Activated CD8-positive, alpha-beta T cell treated with anti-CD3 and anti-CD28 coated beads, Interleukin-2, amount 10 ng/mL, durations not matched to agents 7 days and 5 days (primary cell): ENCODE measurements at regions of chr3 and their contacts with region 1.

Region 1: DNA sequence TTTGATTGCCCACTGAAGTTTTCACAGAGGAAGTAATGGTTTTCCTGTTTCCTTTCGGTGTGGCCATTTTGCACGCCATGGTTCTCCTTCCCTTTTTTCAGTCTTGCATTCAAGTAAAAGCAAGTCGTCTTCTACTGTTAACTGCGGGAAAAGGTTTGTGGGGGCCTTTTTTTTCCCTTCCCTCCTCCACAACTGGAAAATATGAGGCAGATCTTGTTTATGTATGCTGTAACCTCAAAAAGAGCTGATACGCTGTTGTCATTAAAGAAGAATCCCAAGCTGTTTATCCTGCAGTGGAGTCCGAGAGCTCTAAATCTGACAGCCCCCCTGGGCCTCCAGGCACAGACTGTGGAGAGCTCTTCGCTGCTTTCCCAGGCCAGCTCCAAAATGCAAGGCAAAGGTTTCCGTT is 40.4 kb downstream of the FILIP1L start:
- DNase-seq: peak; percentile 53
- ATAC-seq: peak; percentile 48
- H3K4me3 Mint-ChIP-seq: peak overlapping the region; percentile 60
- H3K27ac Mint-ChIP-seq: peak overlapping the region; percentile 91
- H3K4me1 Mint-ChIP-seq: peaks cover 78% of the 10 kb centered on the region
- H3K27me3 Mint-ChIP-seq: no peaks in the 10 kb centered on the region

Region 2: DNA sequence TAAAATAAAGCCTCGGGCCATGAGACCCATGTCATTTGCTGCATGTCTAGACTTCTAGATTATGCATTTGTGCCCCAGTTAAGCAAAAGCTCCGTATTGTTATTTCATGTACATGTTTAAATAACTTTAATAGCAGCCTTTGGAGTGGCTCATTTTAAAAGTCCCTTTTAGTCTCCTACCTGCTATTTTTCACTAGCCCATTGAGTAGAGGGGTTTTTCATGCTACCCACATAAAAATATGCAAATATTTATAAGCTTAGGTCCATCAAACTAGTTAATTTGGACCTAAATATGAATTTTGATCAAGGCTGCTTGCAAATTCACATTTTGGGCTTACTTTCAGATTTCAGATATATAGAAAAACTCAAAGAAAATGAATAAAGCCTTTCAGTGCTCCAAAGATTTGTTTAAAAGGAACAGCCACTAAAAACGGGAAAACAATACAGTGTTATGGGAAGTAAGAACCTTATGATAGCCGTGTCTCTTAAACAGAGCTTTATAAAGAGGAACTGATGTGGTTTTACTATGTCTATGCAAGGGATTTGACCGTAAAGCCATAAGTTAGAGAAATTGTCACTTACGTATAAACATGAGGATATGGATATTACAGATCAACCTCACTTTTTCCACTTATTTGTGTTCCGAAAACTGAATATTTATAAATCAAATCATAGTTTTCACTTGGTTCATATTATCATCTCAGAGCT is 10.3 kb after region 1 on chr3:
- CTCF ChIA-PET with region 1: interaction called, 84 read pairs
- POLR2A ChIA-PET with region 1: interaction called, 10 read pairs
- DNase-seq: no peak
- ATAC-seq: no peak
- H3K4me3 Mint-ChIP-seq: no peak overlapping the region
- H3K27ac Mint-ChIP-seq: no peak overlapping the region
- H3K4me1 Mint-ChIP-seq: peaks cover 56% of the 10 kb centered on the region
- H3K27me3 Mint-ChIP-seq: peaks cover 3% of the 10 kb centered on the region

Region 3: DNA sequence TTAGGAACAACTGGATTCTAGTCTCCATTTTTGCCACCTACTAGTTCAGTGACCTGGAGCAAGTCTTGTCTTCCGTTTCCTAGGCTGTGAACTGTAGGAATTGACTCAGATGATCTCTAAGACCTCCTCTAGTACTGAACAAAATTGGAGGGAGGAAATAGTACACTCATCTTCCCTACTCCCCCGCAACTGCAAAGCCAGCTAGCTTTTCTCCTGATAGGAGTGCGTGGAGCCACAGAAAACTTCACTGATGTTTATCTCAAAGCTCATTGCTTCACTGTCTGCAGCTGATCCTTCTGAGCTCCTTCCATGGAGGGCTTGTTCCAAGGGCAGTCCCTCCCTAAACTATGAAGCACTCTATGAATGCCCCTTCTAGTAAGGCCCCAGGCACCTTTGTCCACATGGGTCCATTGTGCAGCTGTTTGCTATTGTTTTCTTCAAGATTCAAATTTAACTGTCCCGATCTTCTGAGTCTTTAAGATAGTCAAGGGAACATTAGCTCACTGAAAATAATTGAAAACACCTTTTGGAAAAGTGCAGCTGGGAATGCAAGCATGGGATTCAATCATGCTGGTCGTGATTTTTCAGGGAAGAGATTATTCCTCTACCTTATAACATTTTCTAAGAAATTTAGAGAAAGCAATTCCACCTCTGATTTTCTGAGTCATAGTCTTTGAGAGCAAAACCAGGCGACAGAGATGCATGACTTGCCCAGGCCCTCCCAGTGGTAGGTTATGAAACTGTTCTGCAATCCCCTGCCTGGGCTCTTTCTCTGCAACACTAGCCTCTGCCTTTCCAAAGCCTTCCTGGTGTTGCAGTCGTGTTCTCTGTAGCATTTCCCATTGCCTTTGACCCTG is 16.1 kb after region 1 on chr3:
- CTCF ChIA-PET with region 1: interaction called, 84 read pairs
- POLR2A ChIA-PET with region 1: interaction called, 10 read pairs
- DNase-seq: peak; percentile 56
- ATAC-seq: peak; percentile 84
- H3K4me3 Mint-ChIP-seq: no peak overlapping the region
- H3K27ac Mint-ChIP-seq: peak overlapping the region; percentile 43
- H3K4me1 Mint-ChIP-seq: peaks cover 61% of the 10 kb centered on the region
- H3K27me3 Mint-ChIP-seq: peaks cover 3% of the 10 kb centered on the region

Region 4: GRCh38 chr3:100103558-100104441 is 29.9 kb after region 1 on chr3:
- CTCF ChIA-PET with region 1: interaction called, 11 read pairs
- POLR2A ChIA-PET with region 1: no interaction called
- DNase-seq: no peak
- ATAC-seq: no peak
- H3K4me3 Mint-ChIP-seq: no peak overlapping the region
- H3K27ac Mint-ChIP-seq: peak overlapping the region; percentile 31
- H3K4me1 Mint-ChIP-seq: peaks cover 59% of the 10 kb centered on the region
- H3K27me3 Mint-ChIP-seq: no peaks in the 10 kb centered on the region